Vagina (tissue), 2 donors: ENCODE measurements at regions of chr12 and their contacts with region 1.

Region 1: DNA sequence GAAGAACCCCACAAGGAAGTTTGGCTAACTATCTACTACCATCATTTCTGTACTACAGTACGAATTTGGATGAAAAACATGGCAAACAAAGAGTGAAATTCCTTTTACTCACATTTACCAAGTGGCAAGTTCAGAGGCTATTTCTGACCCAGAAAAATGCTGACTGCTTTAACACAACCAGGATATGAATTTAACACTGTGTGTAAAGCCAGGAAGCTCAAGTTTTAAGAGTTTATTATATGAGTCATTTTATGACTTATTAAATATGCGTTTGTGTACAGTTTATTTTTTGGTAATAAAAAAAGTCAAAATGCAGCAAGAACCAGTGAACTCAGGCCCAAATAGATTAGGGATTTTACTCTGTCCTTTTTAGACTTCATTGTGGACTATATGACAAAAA is 58.4 kb upstream of the STAC3 start:
- DNase-seq: no peak
- H3K4me3 ChIP-seq: no peak overlapping the region
- H3K27ac ChIP-seq: no peak overlapping the region
- H3K4me1 ChIP-seq: peaks cover 10% of the 10 kb centered on the region
- H3K27me3 ChIP-seq: no peaks in the 10 kb centered on the region
- CTCF ChIP-seq: no peak
- POLR2A ChIP-seq: no peak

Region 2: GRCh38 chr12:57182921-57183790 is 126.3 kb before region 1 on chr12:
- intact Hi-C with region 1: no loop called
- DNase-seq: no peak
- H3K4me3 ChIP-seq: no peak overlapping the region
- H3K27ac ChIP-seq: peak overlapping the region; percentile 27
- H3K4me1 ChIP-seq: peaks cover 30% of the 10 kb centered on the region
- H3K27me3 ChIP-seq: no peaks in the 10 kb centered on the region
- CTCF ChIP-seq: peak; percentile 73 to 95 (median 93)
- POLR2A ChIP-seq: no peak

Region 3: GRCh38 chr12:57268264-57268663 is 41.2 kb before region 1 on chr12:
- intact Hi-C with region 1: loop called (anchors 2 kb)
- DNase-seq: no peak
- H3K4me3 ChIP-seq: no peak overlapping the region
- H3K27ac ChIP-seq: no peak overlapping the region
- H3K4me1 ChIP-seq: no peaks in the 10 kb centered on the region
- H3K27me3 ChIP-seq: no peaks in the 10 kb centered on the region
- CTCF ChIP-seq: no peak
- POLR2A ChIP-seq: no peak

Region 4: DNA sequence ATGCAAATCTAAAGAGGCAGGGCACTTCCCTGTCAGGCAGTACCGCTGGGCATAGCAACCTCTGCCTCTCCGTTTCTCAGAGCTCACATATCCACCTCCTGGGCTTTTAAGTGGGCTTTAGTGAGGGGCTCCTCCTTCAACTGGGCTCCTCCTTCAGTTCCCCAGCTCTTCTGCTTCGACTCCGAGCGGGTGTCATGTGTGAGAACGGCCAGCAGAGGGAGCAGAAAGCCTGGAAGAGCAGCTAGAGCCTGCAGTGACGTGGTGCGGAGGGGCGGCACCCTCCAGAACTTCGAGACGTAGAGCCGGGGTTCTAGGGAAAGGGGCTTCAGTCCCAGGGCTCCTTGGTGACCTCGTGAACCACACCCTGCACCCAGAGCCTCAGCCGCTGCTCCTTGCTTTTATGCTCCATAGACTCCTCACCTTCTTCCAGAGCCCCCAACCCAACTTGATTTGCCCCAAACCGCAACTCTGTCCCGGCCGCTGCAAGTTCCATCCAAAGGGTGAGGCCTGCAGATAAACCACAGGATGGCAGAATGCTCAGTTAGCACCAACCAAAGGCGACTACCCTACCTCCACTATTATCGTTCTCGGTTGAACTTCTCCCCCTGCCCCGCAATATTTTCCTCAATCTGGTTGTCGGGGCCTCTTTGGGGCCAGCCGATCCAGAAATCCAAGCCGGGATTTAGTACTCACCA is 149.8 kb after region 1 on chr12:
- intact Hi-C with region 1: loop called (anchors 10 kb)
- DNase-seq: no peak
- H3K4me3 ChIP-seq: peak overlapping the region; percentile 60 to 72
- H3K27ac ChIP-seq: peak overlapping the region; percentile 89
- H3K4me1 ChIP-seq: peaks cover 31% of the 10 kb centered on the region
- H3K27me3 ChIP-seq: no peaks in the 10 kb centered on the region
- CTCF ChIP-seq: peak; percentile 96 to 99 (median 98)
- POLR2A ChIP-seq: peak in 1 of 2 donors; percentile 33